Activated B cell treated with CpG ODN at 0.5 μM for 24 hours (primary cell): ENCODE measurements at regions of chr11 and their contacts with region 1.

Region 1: GRCh38 chr11:9363954-9364912 is 20.2 kb upstream of the IPO7 start:
- DNase-seq: peak; percentile 74
- ATAC-seq: peak; percentile 97
- H3K4me3 Mint-ChIP-seq: peak overlapping the region; percentile 86
- H3K27ac Mint-ChIP-seq: peak overlapping the region; percentile 89
- H3K4me1 Mint-ChIP-seq: peaks cover 8% of the 10 kb centered on the region
- H3K27me3 Mint-ChIP-seq: no peaks in the 10 kb centered on the region
- CTCF ChIP-seq: no peak

Region 2: GRCh38 chr11:9285850-9286587 is 78.2 kb before region 1 on chr11:
- CTCF ChIA-PET with region 1: no interaction called
- POLR2A ChIA-PET with region 1: no interaction called
- intact Hi-C with region 1: no loop called
- DNase-seq: no peak
- ATAC-seq: no peak
- H3K4me3 Mint-ChIP-seq: no peak overlapping the region
- H3K27ac Mint-ChIP-seq: no peak overlapping the region
- H3K4me1 Mint-ChIP-seq: no peaks in the 10 kb centered on the region
- H3K27me3 Mint-ChIP-seq: no peaks in the 10 kb centered on the region
- CTCF ChIP-seq: no peak

Region 3: DNA sequence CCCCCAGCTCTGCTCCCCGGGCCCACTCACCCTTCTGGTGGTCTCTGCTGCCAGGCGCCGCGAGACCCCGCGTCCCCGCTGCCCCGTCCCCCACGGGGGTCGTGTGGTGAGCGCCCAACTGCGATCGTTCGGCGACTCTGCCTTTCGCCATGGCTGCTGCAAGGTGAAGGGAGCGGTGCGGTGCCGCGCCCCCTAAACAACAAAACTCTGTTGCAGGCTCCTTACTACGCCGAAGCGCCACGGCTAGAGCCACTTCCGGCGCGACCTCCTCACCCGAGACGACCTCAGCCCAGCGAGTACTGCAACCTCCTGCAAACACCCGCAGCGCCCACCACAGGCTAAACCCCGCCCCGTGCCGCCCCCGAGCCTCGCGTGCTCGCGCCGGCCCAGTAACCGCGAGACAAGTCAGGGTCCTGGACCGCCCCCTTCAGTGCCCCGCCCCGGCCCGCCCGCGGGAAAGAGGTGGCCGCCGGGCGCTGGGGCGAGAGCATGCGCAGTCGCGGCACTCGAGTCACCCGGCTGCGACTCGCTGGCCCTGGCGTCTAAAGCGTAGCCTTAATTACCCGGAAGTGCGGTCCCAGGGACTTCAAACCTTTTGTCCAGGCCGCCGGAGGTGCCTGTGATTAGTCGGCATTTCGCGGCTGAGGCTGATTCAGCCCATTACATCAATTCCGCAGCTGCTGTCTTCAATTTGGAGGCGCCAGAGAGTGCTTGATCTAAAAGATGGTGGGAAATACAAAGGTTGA is 49.8 kb before region 1 on chr11 and contains the start of gene TMEM41B:
- CTCF ChIA-PET with region 1: no interaction called
- POLR2A ChIA-PET with region 1: interaction called, 42 read pairs
- intact Hi-C with region 1: loop called (anchors 1 kb)
- DNase-seq: peak; percentile 100
- ATAC-seq: peak; percentile 96
- H3K4me3 Mint-ChIP-seq: peak within 1 kb of the TSS; percentile 98
- H3K27ac Mint-ChIP-seq: peak within 1 kb of the TSS; percentile 95
- H3K4me1 Mint-ChIP-seq: peaks cover 49% of the 10 kb centered on the region
- H3K27me3 Mint-ChIP-seq: peaks cover 4% of the 10 kb centered on the region
- CTCF ChIP-seq: no peak
- total RNA-seq, gene TMEM41B: 19.4 and 21.7 TPM in 2 replicates